ENCODE measurements at regions of chr5 and their contacts with region 1.

Region 1: DNA sequence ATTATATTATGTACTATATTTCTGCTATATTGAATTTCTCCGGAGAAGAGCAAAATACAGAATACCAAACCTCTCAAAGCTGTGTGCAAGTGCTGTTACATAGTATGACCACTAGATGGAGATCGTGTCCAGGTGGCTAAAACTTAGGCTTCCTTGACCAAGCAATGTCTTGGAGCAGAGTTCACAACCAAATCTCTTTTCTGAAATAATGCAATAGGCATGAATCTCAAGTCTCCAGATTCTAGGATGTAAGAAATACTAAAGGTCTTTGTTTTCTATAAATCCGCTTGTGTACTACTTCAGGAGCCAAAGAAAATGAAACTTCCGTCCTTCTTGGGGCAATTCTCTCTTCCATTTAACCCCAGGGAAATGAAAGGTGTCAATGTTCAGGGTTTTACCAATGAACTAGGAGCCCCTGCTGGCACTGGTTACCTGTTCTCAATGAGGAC is 181.5 kb upstream of the RAI14 start:
- DNase-seq: no peak
- ATAC-seq: peak; percentile 49
- H3K4me3 Mint-ChIP-seq: no peak overlapping the region
- H3K27ac Mint-ChIP-seq: no peak overlapping the region
- H3K4me1 Mint-ChIP-seq: no peaks in the 10 kb centered on the region
- H3K27me3 Mint-ChIP-seq: peaks cover 16% of the 10 kb centered on the region

Region 2: DNA sequence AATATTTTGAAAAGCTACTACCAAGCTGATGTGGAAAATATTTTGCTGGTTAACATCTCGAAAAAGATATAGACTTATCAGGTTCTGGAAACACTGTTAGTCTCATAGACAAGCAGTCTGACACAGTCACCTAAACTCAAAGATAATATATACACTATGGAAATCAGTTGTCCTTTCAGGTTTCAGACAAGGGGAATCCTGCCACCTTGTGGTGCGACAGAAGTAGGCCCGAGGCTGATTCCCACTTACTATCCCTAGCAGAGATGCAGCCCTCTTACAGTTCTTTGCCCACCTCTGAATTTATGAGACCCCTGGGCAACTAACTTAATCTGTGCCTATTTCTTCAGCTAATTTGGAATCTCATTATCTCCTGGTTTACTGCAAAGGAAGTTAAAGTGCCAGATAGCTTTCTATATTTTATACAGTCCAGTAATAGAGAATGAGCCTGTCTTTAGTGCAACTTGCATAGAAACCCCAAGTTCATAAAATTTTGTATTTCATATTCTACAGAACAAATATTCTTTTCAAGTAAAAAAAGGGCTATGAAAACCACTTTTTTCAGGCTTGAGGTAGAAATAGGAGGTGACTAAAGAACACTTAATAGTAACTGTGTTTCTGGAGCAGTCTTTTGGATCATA is 423.8 kb after region 1 on chr5:
- CTCF ChIA-PET with region 1: interaction called, 38 read pairs
- POLR2A ChIA-PET with region 1: no interaction called
- intact Hi-C with region 1: loop called (anchors 1 kb)
- DNase-seq: peak; percentile 77
- ATAC-seq: peak; percentile 86
- H3K4me3 Mint-ChIP-seq: no peak overlapping the region
- H3K27ac Mint-ChIP-seq: no peak overlapping the region
- H3K4me1 Mint-ChIP-seq: no peaks in the 10 kb centered on the region
- H3K27me3 Mint-ChIP-seq: no peaks in the 10 kb centered on the region

Region 3: DNA sequence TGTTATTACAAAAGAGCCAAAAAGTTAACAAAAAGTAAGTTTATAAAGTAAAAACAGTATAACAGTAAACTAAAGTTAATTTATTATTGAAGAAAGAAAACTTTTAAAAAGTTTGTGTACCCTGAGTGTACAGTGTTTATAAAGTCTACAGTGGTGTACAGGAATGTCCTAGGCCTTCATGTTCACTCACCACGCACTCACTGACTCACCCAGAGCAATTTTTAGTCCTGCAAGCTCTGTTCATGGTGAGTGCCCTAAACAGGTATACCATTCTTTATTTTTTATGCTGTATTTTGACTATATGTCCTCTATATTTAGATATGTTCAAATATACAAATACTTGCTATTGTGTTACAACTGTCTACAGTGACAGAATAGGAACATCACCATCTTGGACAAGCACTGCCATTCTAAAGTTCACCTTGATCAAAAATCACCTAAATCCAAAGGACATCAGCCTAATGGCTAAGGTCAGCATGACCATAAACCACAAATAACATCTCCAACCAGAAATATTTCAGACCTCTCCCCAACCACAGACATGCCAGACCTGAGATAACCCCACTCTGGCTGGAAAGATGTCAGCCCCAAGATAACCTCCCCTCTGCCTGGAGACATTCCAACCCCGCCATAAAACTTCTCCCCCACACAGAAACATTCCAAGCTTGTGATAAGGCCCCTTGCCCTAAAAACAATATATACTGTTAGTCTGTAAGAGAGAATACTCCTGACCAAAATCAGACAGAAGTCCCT is 517.1 kb after region 1 on chr5:
- CTCF ChIA-PET with region 1: no interaction called
- POLR2A ChIA-PET with region 1: no interaction called
- intact Hi-C with region 1: no loop called
- DNase-seq: no peak
- ATAC-seq: no peak
- H3K4me3 Mint-ChIP-seq: no peak overlapping the region
- H3K27ac Mint-ChIP-seq: no peak overlapping the region
- H3K4me1 Mint-ChIP-seq: no peaks in the 10 kb centered on the region
- H3K27me3 Mint-ChIP-seq: peaks cover 45% of the 10 kb centered on the region

Region 4: GRCh38 chr5:35003018-35003957 is 528.7 kb after region 1 on chr5:
- CTCF ChIA-PET with region 1: interaction called, 23 read pairs
- POLR2A ChIA-PET with region 1: interaction called, 3 read pairs
- intact Hi-C with region 1: loop called (anchors 2 to 5 kb)
- DNase-seq: peak; percentile 79
- ATAC-seq: peak; percentile 72
- H3K4me3 Mint-ChIP-seq: no peak overlapping the region
- H3K27ac Mint-ChIP-seq: no peak overlapping the region
- H3K4me1 Mint-ChIP-seq: no peaks in the 10 kb centered on the region
- H3K27me3 Mint-ChIP-seq: peaks cover 20% of the 10 kb centered on the region